Activated T-helper 2 cell treated with anti-CD3 and anti-CD28 coated beads, Interferon-gamma antibody, Interleukin-2, Interleukin-4, amounts not matched to agents 10 μg/mL and 5 μg/mL and 100 μg/mL, durations not matched to agents 14 hours and 24 hours and 36 hours (primary cell): ENCODE measurements at regions of chr5 and their contacts with region 1.

Region 1: DNA sequence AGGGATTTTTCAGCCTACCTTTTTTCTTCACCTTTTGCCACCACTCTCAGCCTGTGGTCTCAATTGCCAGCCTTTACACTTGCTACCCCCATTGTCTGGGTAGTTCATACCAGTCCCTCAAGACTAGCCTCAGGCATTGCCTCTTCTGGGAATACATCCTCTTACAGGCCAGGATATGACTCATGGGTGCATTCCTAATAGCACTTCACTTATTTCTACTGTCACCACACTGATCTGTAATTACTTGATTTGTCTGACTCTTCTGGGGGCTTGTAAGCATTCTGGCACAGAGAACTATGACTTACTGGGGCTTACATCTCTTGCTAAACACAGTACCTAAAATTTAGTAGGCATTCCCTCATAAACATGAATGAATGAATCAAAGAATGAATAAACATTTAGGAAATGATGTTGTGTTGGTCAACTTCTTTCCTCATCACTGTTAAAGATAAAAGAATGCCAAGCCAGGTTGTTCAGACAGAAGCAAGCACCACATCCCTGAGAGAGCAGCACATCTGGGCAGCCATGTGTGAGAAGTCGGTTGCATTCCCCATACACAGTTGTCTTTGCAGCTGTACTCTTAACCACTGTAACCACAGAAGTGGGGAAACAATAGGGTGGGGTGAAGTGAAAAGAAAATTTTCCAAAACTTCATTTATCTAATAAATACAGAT is 27.6 kb downstream of the IL7R start:
- DNase-seq: no peak
- H3K4me3 Mint-ChIP-seq: no peak overlapping the region
- H3K27ac Mint-ChIP-seq: peak overlapping the region; percentile 74
- H3K4me1 Mint-ChIP-seq: peaks cover 33% of the 10 kb centered on the region
- H3K27me3 Mint-ChIP-seq: no peaks in the 10 kb centered on the region

Region 2: GRCh38 chr5:35651002-35651756 is 233.1 kb before region 1 on chr5:
- intact Hi-C with region 1: no loop called
- DNase-seq: peak; percentile 46
- H3K4me3 Mint-ChIP-seq: no peak overlapping the region
- H3K27ac Mint-ChIP-seq: no peak overlapping the region
- H3K4me1 Mint-ChIP-seq: peaks cover 11% of the 10 kb centered on the region
- H3K27me3 Mint-ChIP-seq: no peaks in the 10 kb centered on the region

Region 3: GRCh38 chr5:35857606-35858205 is 26.5 kb before region 1 on chr5:
- intact Hi-C with region 1: loop called (anchors 2 kb)
- DNase-seq: no peak
- H3K4me3 Mint-ChIP-seq: peak overlapping the region; percentile 80
- H3K27ac Mint-ChIP-seq: peak overlapping the region; percentile 84
- H3K4me1 Mint-ChIP-seq: peaks cover 79% of the 10 kb centered on the region
- H3K27me3 Mint-ChIP-seq: no peaks in the 10 kb centered on the region

Region 4: DNA sequence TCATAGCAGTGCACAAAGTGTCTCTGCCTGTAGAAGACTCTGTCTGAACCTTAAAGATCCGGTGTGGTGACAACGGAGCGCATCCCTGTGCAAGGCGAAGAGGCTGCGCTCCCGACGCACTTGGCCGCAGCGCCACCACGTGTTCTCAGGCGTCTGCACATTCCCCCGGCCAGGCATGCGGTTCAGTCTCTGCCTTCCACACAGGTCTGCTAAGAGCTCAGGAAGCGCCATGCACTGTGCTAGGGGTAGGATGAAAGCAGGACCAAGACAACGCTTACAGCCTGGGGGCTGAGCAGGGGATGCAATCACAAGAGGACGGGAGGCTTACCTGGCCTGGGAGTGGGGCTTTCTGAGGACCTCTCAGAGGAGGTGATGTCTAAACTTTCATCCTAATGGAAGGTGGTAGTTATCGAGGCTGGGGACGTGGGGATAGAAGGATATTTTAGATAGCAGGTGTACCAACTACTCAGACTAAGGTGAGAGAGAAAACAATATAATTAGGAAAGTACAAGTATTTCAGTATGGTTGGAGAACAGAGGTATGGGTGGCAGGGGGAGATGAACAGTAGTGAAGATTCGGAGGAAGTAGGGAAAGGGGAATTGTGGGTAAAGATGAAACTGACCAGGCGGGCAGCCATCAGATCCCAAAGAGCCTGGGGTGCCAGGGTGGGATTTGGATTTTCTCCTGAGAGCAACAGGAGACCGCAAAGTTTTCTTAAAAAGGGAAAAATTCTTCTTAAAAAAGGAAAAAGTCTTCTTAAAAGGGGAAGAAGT is 40.9 kb after region 1 on chr5:
- intact Hi-C with region 1: no loop called
- DNase-seq: peak; percentile 82
- H3K4me3 Mint-ChIP-seq: peak overlapping the region; percentile 64
- H3K27ac Mint-ChIP-seq: peak overlapping the region; percentile 69
- H3K4me1 Mint-ChIP-seq: peaks cover 44% of the 10 kb centered on the region
- H3K27me3 Mint-ChIP-seq: peaks cover 2% of the 10 kb centered on the region